Activated CD8-positive, alpha-beta memory T cell treated with anti-CD3 and anti-CD28 coated beads, Interleukin-2, amount 10 ng/mL, durations not matched to agents 7 days and 5 days (primary cell): ENCODE measurements at regions of chr2 and their contacts with region 1.

Region 1: DNA sequence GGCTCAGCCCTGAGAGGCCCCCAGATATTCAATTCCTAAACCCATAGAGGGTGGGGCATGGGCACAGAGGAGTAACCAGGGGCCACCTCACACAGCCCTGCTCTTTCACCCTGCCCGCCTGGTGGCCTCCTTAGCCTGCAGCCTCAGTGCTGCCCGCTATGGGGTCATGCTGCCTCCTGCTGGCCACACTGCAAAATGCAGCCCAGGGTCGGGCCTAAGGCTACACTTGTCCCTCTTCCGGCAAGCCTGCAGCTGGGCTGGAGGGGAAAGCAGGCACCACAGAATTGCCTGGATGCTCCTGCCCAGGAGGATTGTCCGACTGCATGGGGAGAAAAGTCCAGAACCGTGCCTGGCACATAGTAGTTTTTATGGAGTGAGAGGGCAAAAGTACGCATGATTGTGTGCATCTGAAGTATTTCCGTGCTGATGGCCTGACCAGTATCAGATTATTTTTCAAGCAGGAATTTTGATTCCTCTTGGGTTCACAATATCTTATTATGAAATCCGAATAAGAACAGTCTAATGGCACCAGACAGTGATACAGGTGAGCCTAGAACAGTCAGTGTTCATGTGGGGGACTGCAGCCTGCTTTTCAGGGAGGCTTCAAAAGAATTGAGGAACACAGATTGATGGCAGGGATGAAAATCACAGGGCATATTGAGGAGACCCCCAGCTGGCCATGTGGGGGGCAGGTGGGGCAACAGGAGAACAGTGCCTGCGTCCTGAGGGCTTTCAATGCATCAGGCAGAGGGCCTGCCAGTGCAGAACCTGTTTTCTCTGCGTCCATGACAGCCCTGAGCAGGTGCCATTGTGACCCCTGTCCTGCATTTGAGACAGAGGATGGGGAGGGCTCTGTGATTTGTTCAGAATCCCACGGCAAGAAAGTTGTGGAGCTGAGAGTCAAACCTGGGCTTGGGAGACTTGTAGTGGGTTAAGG is 51.2 kb upstream of the ALPP start:
- DNase-seq: peak; percentile 87
- ATAC-seq: peak; percentile 87
- H3K4me3 Mint-ChIP-seq: no peak overlapping the region
- H3K27ac Mint-ChIP-seq: no peak overlapping the region
- H3K4me1 Mint-ChIP-seq: peaks cover 8% of the 10 kb centered on the region
- H3K27me3 Mint-ChIP-seq: no peaks in the 10 kb centered on the region

Region 2: GRCh38 chr2:231900486-231900942 is 426.9 kb before region 1 on chr2:
- CTCF ChIA-PET with region 1: interaction called, 24 read pairs
- DNase-seq: peak; percentile 67
- ATAC-seq: peak; percentile 75
- H3K4me3 Mint-ChIP-seq: no peak overlapping the region
- H3K27ac Mint-ChIP-seq: no peak overlapping the region
- H3K4me1 Mint-ChIP-seq: no peaks in the 10 kb centered on the region
- H3K27me3 Mint-ChIP-seq: peaks cover 8% of the 10 kb centered on the region

Region 3: GRCh38 chr2:232142049-232142448 is 185.3 kb before region 1 on chr2:
- CTCF ChIA-PET with region 1: interaction called, 15 read pairs
- DNase-seq: no peak
- ATAC-seq: no peak
- H3K4me3 Mint-ChIP-seq: no peak overlapping the region
- H3K27ac Mint-ChIP-seq: no peak overlapping the region
- H3K4me1 Mint-ChIP-seq: peaks cover 13% of the 10 kb centered on the region
- H3K27me3 Mint-ChIP-seq: no peaks in the 10 kb centered on the region

Region 4: DNA sequence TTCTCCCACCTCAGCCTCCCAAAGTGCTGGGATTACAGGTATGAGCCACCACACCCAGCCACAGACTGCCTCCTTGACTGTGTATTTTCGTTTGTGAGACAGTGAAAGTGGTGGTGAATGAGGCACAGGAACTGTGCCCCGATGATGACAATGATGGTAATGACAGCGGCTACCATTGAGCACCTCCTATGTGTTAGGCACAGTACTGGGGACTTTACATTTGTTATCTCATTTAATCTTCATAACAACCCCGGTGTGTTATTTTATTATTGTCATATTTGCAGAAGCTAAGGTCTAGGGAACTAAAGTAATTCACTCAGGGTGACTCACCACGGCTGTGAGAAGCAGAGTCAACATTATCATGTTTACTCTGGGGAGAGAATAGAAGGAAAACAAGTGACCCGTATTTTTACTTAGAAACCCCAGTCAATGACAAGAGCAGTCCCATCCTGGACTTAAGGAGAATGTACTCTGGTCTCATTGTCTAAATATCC is 26.4 kb before region 1 on chr2:
- CTCF ChIA-PET with region 1: interaction called, 18 read pairs
- DNase-seq: no peak
- ATAC-seq: no peak
- H3K4me3 Mint-ChIP-seq: no peak overlapping the region
- H3K27ac Mint-ChIP-seq: no peak overlapping the region
- H3K4me1 Mint-ChIP-seq: peaks cover 16% of the 10 kb centered on the region
- H3K27me3 Mint-ChIP-seq: no peaks in the 10 kb centered on the region

Region 5: GRCh38 chr2:232315049-232315922 is 12.1 kb before region 1 on chr2:
- CTCF ChIA-PET with region 1: interaction called, 40 read pairs
- DNase-seq: peak; percentile 94
- ATAC-seq: peak; percentile 94
- H3K4me3 Mint-ChIP-seq: peak overlapping the region; percentile 46
- H3K27ac Mint-ChIP-seq: peak overlapping the region; percentile 93
- H3K4me1 Mint-ChIP-seq: peaks cover 67% of the 10 kb centered on the region
- H3K27me3 Mint-ChIP-seq: no peaks in the 10 kb centered on the region